Right cardiac atrium (tissue), 5 donors: ENCODE measurements at regions of chr7 and their contacts with region 1.

Region 1: GRCh38 chr7:105934572-105935185 is 28.4 kb upstream of the CDHR3 start:
- DNase-seq: peak in 1 of 3 donors; percentile 33
- ATAC-seq: peak; percentile 53 to 84
- H3K4me3 ChIP-seq: no peak overlapping the region
- H3K27ac ChIP-seq: no peak overlapping the region
- H3K4me1 ChIP-seq: peaks cover 2% of the 10 kb centered on the region
- H3K27me3 ChIP-seq: no peaks in the 10 kb centered on the region

Region 2: DNA sequence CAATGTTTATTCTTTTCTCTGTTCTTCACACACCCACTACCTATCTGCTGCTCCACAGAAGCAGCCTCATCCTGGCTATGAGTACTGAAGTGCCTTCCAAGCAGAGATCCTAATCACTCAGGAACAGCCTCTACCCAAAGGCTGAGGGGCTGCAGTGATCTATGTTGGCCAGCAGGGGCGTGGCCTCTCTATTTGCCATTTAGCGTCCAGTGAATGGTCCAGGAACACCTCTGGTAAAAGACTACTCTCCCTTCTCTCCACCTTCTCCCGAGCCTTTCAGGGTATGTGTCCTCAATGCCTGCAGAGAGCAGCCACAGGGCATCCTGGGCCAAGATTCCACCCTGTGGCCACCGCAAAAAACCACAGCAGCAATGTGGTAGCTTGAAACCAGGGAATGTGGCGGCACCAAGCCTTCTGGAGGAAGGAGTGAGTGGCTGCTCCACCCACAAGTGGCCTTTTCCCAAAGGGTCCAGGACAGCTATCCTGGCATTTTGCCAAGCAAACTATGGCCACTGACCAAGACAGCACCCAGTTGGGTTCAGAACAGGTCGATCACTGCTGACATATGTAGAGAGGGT is 106.5 kb after region 1 on chr7:
- intact Hi-C with region 1: loop called in 1 of 4 experiments (anchors 10 kb)
- DNase-seq: no peak
- ATAC-seq: no peak
- H3K4me3 ChIP-seq: no peak overlapping the region
- H3K27ac ChIP-seq: no peak overlapping the region
- H3K4me1 ChIP-seq: no peaks in the 10 kb centered on the region
- H3K27me3 ChIP-seq: no peaks in the 10 kb centered on the region

Region 3: GRCh38 chr7:106568680-106569499 is 634.2 kb after region 1 on chr7:
- intact Hi-C with region 1: no loop called
- DNase-seq: no peak
- ATAC-seq: peak; percentile 68 to 74
- H3K4me3 ChIP-seq: no peak overlapping the region
- H3K27ac ChIP-seq: no peak overlapping the region
- H3K4me1 ChIP-seq: no peaks in the 10 kb centered on the region
- H3K27me3 ChIP-seq: no peaks in the 10 kb centered on the region